Ascending aorta (tissue), 2 donors: ENCODE measurements at regions of chr10 and their contacts with region 1.

Region 1: DNA sequence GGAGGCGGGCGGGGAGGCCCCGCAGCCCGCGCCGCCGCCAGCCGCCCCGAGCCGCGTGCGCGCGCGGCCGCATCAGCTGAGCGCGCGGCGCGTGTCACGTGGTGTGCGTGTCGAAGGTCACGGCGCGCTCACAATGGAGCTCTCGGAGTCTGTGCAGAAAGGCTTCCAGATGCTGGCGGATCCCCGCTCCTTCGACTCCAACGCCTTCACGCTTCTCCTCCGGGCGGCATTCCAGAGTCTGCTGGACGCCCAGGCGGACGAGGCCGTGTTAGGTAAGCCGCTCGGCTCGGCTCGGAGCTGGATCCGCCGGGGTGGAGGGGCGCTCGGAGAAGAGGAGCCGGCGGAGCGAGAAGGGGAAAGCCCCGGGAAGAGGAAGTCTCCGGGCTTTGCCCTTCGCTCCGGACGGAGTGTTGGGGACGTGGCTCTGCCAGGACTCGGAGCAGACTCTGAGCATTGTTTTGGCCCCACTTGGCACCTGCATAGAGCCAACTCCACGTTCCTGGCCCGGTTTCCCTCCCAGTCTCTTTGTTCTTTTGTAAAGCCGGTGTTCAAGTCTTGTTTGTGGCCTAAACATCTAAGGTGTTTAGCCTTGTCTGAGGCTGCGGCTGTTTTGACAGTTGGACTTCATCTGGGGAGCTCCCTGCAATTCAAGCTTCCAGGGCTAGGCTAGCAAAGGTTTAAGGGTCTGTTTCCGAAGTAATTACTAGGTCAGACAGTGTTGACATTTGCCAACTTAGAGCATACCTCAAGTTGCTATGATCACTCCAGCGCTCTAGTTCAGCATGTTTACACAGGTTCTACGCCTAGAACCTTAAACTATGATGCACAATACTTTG is at the start of gene COMMD3:
- DNase-seq: peak in 1 of 2 donors; percentile 93
- H3K4me3 ChIP-seq: peak within 1 kb of the TSS; percentile 91 to 94
- H3K27ac ChIP-seq: peak within 1 kb of the TSS; percentile 89 to 90
- H3K4me1 ChIP-seq: peaks cover 4 to 27% of the 10 kb centered on the region in 2 donors
- H3K27me3 ChIP-seq: no peaks in the 10 kb centered on the region
- CTCF ChIP-seq: no peak
- total RNA-seq, gene COMMD3: 21.9 TPM

Region 2: GRCh38 chr10:21336476-21337170 is 979.9 kb before region 1 on chr10:
- intact Hi-C with region 1: loop called (anchors 10 kb)
- DNase-seq: peak in 1 of 2 donors; percentile 75
- H3K4me3 ChIP-seq: no peak overlapping the region
- H3K27ac ChIP-seq: no peak overlapping the region
- H3K4me1 ChIP-seq: peaks cover 2 to 18% of the 10 kb centered on the region in 2 donors
- H3K27me3 ChIP-seq: no peaks in the 10 kb centered on the region
- CTCF ChIP-seq: no peak

Region 3: DNA sequence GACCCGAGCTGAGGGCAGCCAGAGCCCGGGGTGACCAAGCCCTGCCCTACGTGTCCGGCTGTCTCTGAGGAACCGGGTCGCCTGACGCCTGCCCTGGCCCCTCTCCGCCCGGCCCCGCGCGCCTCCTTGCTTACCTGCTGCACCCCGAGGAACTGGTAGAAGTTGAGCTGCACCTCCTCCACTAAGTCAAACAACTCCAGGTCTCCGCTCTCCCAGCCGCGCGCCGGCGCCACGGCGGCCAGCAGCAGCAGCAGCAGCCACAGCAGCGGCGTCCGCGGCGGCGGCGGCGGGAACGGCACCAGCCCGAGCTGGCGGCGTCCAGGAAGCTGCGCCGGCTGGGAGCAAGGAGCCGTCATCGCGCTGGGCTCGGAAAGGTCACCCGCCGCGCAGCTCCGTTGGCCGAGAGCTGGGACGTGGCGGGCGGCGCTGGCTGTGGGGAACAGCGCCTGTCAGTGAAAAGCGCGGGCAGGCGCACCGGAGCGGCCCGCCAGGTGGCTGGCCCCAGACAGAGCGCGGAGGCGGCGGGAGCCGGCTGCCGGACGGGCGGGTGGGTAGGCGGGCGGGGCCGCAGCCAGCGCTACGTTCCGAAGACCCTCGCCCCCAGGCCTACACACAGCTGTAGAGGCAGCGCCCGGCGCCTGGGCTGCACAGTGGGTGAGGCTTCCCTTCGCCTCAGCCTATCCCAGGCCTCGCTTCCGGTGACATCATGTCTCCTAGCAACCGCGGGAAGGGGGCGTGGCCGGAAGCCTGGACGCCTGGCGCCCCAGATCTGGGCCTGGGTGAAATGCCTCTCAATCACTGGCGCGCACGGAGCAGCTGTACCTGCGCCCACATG is 313.2 kb before region 1 on chr10 and contains the start of gene DNAJC1:
- intact Hi-C with region 1: loop called (anchors 2 kb)
- DNase-seq: peak; percentile 93 to 99
- H3K4me3 ChIP-seq: peak within 1 kb of the TSS; percentile 74 to 81
- H3K27ac ChIP-seq: peak within 1 kb of the TSS; percentile 96
- H3K4me1 ChIP-seq: peaks cover 0 to 6% of the 10 kb centered on the region in 2 donors
- H3K27me3 ChIP-seq: no peaks in the 10 kb centered on the region
- CTCF ChIP-seq: peak in 2 of 3 experiments; percentile 13 to 15
- total RNA-seq, gene DNAJC1: 26.1 TPM

Region 4: DNA sequence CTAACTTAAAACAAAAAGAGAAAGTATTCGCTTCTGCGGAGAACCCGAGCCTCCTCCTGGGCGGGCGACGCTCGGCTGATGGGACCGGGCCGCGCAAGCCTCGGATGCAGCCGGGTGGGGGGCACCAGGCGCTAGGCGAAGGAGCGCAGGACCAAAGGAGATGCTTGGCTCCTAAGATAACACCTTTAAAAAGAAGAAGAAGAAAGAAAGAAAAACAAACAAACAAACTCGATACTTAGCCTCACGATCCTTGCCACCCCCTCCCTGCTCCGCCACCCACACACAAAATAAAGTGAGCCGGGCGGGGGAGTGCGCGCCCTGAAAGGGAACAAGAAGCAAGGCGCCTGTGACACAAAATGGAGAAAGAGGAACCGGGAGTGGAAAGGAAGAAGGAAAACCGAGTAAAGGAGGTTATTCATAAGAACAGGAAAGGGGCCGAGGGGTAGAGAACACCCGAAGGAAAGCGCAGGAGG is 64.7 kb before region 1 on chr10:
- intact Hi-C with region 1: loop called (anchors 2 kb)
- DNase-seq: peak in 1 of 2 donors; percentile 81
- H3K4me3 ChIP-seq: peak overlapping the region; percentile 81 to 93
- H3K27ac ChIP-seq: peak overlapping the region; percentile 98
- H3K4me1 ChIP-seq: no peaks in the 10 kb centered on the region
- H3K27me3 ChIP-seq: no peaks in the 10 kb centered on the region
- CTCF ChIP-seq: no peak

Region 5: DNA sequence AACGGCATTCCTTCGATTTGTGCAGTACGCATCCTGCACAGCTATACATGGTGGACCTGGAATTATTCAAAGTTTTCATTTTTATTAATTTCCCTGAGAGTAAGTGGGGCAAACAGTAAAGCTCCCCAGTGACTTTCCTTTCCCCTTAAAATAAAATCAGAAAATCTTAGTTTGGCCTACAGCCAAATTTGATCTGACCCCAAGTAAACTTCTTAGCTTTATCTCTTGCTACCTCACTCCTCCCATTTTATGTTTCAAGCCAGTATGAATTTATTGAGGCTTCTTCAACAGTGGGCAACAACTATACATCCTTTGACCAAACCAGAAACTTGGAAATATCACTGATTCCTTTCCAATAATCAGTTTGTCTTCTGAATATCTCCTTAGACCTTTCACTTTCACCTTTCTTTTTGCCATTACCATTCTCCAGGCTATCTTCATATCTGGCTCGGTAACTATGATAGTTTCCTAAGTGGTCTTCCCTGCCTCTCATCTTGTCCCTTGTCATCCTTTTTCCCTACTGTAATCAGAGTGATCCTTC is 39.9 kb after region 1 on chr10:
- intact Hi-C with region 1: no loop called
- DNase-seq: no peak
- H3K4me3 ChIP-seq: no peak overlapping the region
- H3K27ac ChIP-seq: no peak overlapping the region
- H3K4me1 ChIP-seq: no peaks in the 10 kb centered on the region
- H3K27me3 ChIP-seq: no peaks in the 10 kb centered on the region
- CTCF ChIP-seq: no peak

Region 6: DNA sequence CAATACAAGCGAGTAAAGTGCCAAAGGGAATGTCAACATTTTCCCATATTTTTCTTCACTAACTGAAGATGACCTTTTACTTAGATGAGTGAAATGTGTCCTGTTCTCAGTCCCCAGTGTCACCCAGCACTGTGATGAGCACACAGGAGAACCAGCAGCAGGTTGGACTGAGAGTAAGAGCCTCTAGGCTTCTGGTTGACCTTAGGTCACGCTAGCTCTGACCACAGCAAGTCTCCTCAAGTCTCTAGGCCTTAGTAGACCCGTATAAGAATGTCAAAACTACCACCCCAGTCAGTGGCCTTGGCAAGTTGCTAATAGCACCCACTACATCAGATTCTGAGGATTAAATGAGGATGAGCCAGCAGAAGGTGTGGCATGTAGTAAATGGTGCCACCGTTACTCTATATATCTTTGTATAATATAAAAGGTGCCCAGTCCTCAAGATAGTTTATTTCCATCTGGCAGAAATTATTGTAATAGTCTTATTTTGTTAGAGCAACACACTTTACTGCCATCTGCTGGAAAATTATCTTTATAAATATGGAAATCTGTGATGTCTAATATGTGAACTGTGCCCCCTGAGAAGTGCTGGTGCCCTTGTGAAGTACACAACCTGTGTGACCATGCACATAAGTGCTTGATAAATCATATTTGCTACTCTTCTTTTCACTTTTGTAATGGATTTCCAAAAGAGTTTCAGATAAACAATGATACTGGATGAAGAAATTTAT is 104.4 kb after region 1 on chr10:
- intact Hi-C with region 1: no loop called
- DNase-seq: no peak
- H3K4me3 ChIP-seq: no peak overlapping the region
- H3K27ac ChIP-seq: no peak overlapping the region
- H3K4me1 ChIP-seq: no peaks in the 10 kb centered on the region
- H3K27me3 ChIP-seq: no peaks in the 10 kb centered on the region
- CTCF ChIP-seq: peak in 1 of 3 experiments; percentile 35

Region 7: DNA sequence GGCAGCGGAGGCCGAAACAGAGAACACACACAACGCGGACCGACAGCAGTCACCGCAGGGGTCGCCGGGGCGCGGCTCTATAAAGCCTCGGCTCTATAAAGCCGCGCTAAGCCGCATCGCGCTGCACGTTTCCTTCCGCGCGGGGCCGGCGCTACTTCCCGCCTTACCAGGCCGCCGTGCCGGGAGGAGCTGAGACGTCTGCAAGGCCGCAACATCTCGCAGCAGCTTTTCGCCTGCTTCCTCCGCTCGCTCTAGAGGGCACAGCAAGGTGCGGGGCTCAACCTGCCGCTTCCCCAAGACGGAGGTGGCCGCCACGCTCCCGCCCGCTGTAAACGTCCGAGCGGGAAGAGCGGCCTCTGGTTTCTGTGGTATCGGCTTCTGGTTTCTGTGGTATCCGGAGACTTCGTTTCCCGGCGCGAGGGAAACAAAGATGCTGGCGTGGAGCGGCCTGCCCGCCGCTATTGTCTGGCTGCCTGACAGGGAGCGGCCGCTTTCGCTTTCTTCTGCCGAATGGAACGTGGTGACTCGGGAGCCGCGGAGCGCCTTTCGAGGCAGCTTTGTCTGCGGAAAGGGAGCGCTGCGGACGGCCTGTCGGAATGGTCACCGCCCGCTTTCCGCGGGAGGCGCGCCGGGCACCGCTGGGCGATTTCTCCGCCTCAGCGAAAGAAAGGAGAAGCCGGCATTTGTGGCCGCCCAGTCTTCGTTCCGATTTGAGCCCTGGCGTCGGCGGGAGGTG is 120.5 kb after region 1 on chr10:
- intact Hi-C with region 1: loop called (anchors 5 kb)
- DNase-seq: peak; percentile 43 to 94
- H3K4me3 ChIP-seq: peak overlapping the region; percentile 72 to 78
- H3K27ac ChIP-seq: peak overlapping the region; percentile 92 to 97
- H3K4me1 ChIP-seq: peaks cover 0 to 15% of the 10 kb centered on the region in 2 donors
- H3K27me3 ChIP-seq: no peaks in the 10 kb centered on the region
- CTCF ChIP-seq: peak in 1 of 3 experiments; percentile 19

Region 8: DNA sequence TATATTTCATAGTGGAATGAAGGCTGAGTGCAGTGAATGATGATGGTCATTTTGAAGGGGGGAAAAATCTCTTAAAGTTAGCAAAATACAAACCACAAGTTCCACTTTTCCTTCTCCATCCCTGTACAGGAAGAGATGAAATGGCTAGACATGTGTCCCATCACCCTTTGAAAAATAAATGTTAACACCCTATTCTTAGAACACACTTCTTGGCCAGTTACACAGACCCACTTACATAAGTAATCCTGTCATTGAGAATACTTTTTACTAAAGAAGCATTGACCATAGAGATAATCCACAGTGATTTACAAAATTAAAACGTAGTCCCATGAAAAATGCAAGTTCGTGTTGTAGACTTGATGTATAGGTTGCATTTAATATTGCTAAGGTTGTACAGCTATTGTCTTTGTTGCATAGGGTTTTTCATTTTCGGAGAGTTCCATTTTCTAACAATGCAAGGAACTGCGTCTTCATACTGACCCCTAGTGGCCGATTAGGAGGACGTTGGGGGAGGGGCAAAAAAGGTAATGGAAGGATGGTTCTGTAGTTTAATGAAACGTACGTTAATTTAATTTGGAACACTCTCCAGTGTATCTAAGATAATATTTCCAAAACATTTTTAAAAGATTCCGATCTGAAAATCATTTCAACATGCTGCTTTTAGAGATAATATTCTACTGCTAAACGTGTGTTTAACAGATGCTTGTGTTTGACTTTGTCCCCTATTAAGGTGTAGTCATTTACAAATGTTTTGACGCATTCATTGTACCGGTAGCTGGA is 672.3 kb after region 1 on chr10:
- intact Hi-C with region 1: loop called (anchors 5 kb)
- DNase-seq: peak in 1 of 2 donors; percentile 79
- H3K4me3 ChIP-seq: no peak overlapping the region
- H3K27ac ChIP-seq: no peak overlapping the region
- H3K4me1 ChIP-seq: peaks cover 0 to 3% of the 10 kb centered on the region in 2 donors
- H3K27me3 ChIP-seq: no peaks in the 10 kb centered on the region
- CTCF ChIP-seq: peak; percentile 86

Region 9: DNA sequence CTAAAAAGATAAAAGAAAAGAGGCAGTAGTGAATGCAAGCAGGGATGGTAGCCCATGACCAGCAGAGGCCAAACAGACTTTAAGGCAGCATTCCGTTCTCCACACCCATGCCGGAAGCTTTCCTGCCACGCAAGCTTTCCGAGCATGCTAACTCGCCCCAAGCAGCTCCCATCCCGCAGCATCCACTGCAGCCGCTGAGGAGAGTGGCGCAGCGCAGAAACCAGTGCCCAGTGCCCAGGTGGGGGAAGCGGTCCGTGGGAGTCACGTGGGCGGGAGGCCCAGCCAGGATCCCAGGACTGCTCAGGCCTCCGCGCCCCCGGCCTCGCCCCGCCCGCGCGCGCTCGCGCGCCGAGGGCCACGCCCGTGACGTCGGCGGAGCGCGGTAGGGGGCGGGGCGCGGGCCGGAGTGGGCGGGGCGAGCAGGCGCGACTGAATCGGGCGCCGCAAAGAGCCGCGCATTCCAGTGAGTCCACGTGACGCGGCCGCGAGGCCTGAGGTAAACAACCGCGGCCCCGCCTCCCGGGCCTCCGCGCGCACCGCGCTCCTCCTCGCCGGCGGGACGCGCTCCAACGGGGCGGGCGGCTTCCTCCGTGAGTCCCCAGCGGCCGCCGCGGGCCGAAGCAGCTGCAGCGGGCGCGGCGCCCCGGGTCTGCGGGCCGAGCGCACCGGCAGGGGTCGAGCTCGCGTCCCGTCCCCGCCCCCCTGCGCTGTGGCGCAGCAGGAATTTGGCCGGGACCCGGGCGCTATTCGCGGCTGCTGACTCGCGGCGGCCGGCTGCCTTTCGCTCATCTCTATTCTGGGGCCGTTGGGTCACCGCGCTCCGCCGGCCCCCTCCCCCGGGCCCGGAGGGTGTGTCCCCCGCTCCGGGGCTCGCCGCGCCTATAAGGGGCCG is 1122.3 kb after region 1 on chr10 and contains the start of gene OTUD1:
- intact Hi-C with region 1: loop called (anchors 5 kb)
- DNase-seq: peak; percentile 82 to 98
- H3K4me3 ChIP-seq: peak within 1 kb of the TSS; percentile 91 to 96
- H3K27ac ChIP-seq: peak within 1 kb of the TSS; percentile 88 to 93
- H3K4me1 ChIP-seq: peaks cover 0 to 24% of the 10 kb centered on the region in 2 donors
- H3K27me3 ChIP-seq: no peaks in the 10 kb centered on the region
- CTCF ChIP-seq: peak in 1 of 3 experiments; percentile 26
- total RNA-seq, gene OTUD1: 24.1 TPM